ENCODE measurements at regions of chr14 and their contacts with region 1.

Region 1: DNA sequence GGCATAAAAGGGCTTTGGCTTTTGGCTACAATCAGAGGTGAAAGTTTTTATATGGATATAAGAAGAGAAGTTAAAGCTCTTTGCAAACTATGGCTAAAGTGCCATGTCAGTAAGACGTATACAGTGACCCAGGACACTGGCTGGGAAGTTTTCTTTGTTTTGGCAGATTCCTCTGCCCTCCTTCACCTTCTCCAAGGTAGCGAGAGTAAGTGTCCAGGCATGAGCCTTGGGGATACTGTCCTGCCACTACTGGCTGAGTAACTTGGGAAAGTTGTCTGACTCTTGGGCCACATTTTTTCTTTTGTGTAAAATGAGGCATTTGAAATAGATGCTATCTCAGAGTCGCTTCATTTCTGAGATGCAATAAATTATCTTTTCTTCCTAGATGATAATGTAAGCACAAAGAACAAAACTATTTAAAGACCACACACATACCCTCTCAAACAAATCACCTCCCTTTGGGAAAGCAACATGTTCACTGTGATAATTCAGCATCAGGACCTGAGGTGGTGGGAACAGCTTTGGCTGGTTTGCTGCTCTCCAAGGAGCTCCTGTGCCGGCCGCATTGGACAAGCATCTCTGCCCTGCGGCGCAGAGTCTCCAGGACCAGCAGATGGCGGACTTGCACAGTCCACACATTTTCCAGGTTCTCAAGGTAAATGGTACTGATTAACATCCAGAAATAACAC is 106.3 kb downstream of the PTCSC3 start:
- DNase-seq: peak; percentile 47
- H3K4me3 ChIP-seq: no peak overlapping the region
- H3K27ac ChIP-seq: no peak overlapping the region
- H3K4me1 ChIP-seq: no peaks in the 10 kb centered on the region
- H3K27me3 ChIP-seq: peaks cover 0 to 2% of the 10 kb centered on the region in 2 experiments
- CTCF ChIP-seq: peak; percentile 69 to 79
- POLR2A ChIP-seq: no peak

Region 2: GRCh38 chr14:35883677-35884293 is 186.4 kb before region 1 on chr14:
- CTCF ChIA-PET with region 1: interaction called, 35 read pairs
- POLR2A ChIA-PET with region 1: no interaction called
- dilution Hi-C with region 1: no loop called
- intact Hi-C with region 1: loop called (anchors 1 kb)
- DNase-seq: no peak
- H3K4me3 ChIP-seq: no peak overlapping the region
- H3K27ac ChIP-seq: no peak overlapping the region
- H3K4me1 ChIP-seq: peaks cover 6% of the 10 kb centered on the region
- H3K27me3 ChIP-seq: peaks cover 2 to 4% of the 10 kb centered on the region in 2 experiments
- CTCF ChIP-seq: peak; percentile 52 to 53
- POLR2A ChIP-seq: no peak

Region 3: DNA sequence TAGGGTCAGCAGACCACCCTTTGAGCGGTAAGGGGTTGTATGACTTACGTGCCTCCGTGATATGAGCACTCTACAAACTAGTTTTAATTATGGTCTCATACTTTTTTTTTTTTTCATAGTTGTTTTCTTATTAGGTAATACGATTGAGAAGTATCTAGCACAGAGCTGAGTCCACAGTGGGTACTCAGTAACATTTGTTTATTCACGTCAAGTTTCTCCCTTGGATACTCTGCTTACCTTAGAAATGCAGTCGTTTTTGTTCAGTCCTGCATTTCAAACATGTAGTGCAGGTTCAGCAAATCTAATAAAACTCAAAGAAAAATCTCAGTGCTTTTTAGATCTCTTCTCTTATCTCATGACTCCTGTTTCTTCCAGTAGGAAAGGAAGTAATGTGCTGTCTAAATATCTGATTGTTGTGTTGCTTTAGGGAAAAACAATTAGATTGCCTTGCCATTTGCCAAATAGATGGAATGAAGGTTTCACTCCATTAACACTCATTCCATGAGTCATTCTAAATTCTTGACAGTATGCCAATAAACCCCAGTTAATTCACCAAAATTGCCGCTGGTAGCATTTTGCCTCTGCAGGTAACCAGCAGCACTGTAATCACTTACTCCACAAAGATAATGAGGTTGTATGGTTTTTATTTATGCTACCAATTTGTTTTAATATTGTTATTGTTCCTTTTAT is 12.6 kb before region 1 on chr14:
- CTCF ChIA-PET with region 1: interaction called, 31 read pairs
- POLR2A ChIA-PET with region 1: no interaction called
- dilution Hi-C with region 1: no loop called
- intact Hi-C with region 1: no loop called
- DNase-seq: peak; percentile 10
- H3K4me3 ChIP-seq: no peak overlapping the region
- H3K27ac ChIP-seq: no peak overlapping the region
- H3K4me1 ChIP-seq: no peaks in the 10 kb centered on the region
- H3K27me3 ChIP-seq: peaks cover 0 to 2% of the 10 kb centered on the region in 2 experiments
- CTCF ChIP-seq: no peak
- POLR2A ChIP-seq: no peak

Region 4: DNA sequence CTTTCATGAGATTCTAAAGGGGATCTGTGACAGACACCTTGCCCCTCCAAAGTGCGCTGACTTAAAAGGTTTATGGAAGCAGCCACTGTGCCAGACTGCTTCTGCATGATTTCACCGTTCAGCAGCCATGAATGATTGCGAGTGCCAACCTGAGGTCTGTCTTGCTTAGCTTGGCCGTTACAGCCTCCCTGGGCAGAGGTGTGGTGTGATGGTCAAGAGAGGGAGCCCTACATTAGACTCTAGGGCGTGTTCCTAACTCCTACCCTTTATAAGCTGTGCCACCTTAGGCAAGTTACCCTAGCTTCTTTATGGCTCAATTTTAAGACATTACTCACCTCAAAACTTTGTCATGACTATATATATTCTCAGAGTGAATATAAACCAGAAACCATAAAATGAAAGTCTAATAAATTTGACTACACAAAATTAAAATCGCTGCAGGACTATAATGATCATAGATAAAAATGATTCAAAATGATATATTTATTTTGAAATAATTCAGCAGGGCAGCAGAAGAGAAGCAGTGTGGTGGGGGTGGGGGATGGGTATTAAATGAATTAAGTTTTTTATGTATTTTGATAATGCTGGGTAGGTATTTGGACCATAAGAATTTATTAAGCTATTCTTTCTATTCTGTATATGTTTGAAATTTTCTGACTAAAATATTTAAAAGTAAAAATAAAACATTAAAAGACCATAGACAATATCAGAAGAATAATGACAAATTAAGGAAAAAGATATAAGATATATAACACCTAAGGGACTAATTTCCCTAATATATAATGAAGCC is 298.0 kb after region 1 on chr14:
- CTCF ChIA-PET with region 1: interaction called, 178 read pairs
- POLR2A ChIA-PET with region 1: no interaction called
- dilution Hi-C with region 1: no loop called
- intact Hi-C with region 1: no loop called
- DNase-seq: no peak
- H3K4me3 ChIP-seq: no peak overlapping the region
- H3K27ac ChIP-seq: no peak overlapping the region
- H3K4me1 ChIP-seq: no peaks in the 10 kb centered on the region
- H3K27me3 ChIP-seq: peaks cover 2 to 3% of the 10 kb centered on the region in 2 experiments
- CTCF ChIP-seq: no peak
- POLR2A ChIP-seq: no peak

Region 5: GRCh38 chr14:36520601-36521525 is 450.7 kb after region 1 on chr14:
- CTCF ChIA-PET with region 1: interaction called, 12 read pairs
- POLR2A ChIA-PET with region 1: no interaction called
- dilution Hi-C with region 1: no loop called
- intact Hi-C with region 1: loop called (anchors 1 kb)
- DNase-seq: peak; percentile 6
- H3K4me3 ChIP-seq: no peak overlapping the region
- H3K27ac ChIP-seq: no peak overlapping the region
- H3K4me1 ChIP-seq: peaks cover 6% of the 10 kb centered on the region
- H3K27me3 ChIP-seq: peaks cover 90 to 99% of the 10 kb centered on the region in 2 experiments
- CTCF ChIP-seq: peak; percentile 18 to 45
- POLR2A ChIP-seq: no peak

Region 6: GRCh38 chr14:36604757-36605505 is 534.8 kb after region 1 on chr14:
- CTCF ChIA-PET with region 1: interaction called, 35 read pairs
- POLR2A ChIA-PET with region 1: no interaction called
- dilution Hi-C with region 1: no loop called
- intact Hi-C with region 1: loop called (anchors 1 kb)
- DNase-seq: peak; percentile 70
- H3K4me3 ChIP-seq: no peak overlapping the region
- H3K27ac ChIP-seq: no peak overlapping the region
- H3K4me1 ChIP-seq: no peaks in the 10 kb centered on the region
- H3K27me3 ChIP-seq: peaks cover 2 to 3% of the 10 kb centered on the region in 2 experiments
- CTCF ChIP-seq: peak; percentile 72 to 73
- POLR2A ChIP-seq: no peak

Measured in endothelial cell of umbilical vein (primary cell).